ENCODE measurements at regions of chr15 and their contacts with region 1.

Region 1: GRCh38 chr15:75554717-75555116 is 24.4 kb downstream of the PTPN9 start:
- DNase-seq: no peak
- CTCF ChIP-seq: no peak

Region 2: GRCh38 chr15:75532413-75533147 is 22.1 kb before region 1 on chr15:
- CTCF ChIA-PET with region 1: interaction called, 10 read pairs
- POLR2A ChIA-PET with region 1: no interaction called
- DNase-seq: no peak
- CTCF ChIP-seq: peak; percentile 34

Region 3: DNA sequence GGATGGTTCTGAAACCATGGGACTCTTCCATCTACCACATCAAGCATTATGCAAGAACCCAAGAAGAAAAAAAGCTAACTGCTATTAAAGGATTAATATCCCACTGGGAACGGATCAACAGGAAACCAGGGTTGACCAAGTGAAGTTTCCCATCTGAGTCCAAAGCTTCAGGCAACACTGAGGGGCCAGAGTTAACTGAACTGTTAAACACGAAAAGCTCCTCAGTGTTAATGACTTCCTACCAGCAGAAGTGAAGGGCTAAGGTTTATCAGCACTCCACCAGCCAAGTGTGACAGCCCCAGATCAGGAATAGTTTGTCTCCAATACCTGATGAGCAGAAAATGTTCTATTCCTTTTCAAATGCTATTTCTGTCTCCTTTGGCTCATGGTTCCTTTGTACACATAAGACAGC is 12.3 kb before region 1 on chr15:
- CTCF ChIA-PET with region 1: interaction called, 13 read pairs
- POLR2A ChIA-PET with region 1: no interaction called
- DNase-seq: no peak
- CTCF ChIP-seq: no peak

Measured in GM10248 (cell line).